ENCODE measurements at regions of chr19 and their contacts with region 1.

Region 1: DNA sequence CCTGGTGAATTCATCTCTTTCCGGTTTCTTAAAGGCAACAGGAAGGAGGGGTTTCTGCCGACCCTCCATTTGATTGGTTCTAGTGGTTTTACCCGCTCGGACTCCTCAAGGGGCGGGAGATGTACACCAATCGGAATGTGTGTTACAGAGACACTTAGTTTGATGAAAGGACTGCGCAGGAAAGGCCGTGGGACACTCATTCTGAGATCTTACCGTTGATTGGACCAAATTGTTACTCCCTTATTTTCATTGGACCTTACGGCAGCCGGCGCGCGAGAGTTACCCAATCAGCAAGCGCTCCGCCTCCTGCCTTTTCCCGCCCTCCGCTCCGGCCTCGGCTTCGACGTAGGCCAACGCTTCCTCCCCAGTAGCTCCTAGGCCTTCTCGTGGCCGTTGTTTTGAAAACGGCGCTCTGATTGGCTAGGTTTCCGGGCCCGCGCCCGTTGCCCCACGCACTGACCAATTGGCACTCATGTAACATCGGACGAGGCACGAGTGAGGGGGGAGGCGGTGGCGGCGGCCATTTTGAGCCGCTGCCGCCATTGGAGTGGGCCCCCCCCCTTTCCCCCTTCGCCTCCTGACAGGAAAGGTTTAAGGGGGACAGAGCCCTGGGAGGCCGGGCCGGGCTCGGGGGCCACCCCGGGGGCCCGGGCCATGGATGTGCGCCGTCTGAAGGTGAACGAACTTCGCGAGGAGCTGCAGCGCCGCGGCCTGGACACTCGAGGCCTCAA is at the start of gene HNRNPUL1:
- DNase-seq: peak; percentile 99
- H3K4me3 ChIP-seq: peak within 1 kb of the TSS; percentile 87 to 100
- H3K27ac ChIP-seq: peak within 1 kb of the TSS; percentile 98 to 100
- H3K4me1 ChIP-seq: peaks cover 21% of the 10 kb centered on the region
- H3K27me3 ChIP-seq: no peaks in the 10 kb centered on the region
- CTCF ChIP-seq: peak in 1 of 3 experiments; percentile 24
- POLR2A ChIP-seq: no peak
- total RNA-seq, gene HNRNPUL1: 192 to 197 TPM

Region 2: DNA sequence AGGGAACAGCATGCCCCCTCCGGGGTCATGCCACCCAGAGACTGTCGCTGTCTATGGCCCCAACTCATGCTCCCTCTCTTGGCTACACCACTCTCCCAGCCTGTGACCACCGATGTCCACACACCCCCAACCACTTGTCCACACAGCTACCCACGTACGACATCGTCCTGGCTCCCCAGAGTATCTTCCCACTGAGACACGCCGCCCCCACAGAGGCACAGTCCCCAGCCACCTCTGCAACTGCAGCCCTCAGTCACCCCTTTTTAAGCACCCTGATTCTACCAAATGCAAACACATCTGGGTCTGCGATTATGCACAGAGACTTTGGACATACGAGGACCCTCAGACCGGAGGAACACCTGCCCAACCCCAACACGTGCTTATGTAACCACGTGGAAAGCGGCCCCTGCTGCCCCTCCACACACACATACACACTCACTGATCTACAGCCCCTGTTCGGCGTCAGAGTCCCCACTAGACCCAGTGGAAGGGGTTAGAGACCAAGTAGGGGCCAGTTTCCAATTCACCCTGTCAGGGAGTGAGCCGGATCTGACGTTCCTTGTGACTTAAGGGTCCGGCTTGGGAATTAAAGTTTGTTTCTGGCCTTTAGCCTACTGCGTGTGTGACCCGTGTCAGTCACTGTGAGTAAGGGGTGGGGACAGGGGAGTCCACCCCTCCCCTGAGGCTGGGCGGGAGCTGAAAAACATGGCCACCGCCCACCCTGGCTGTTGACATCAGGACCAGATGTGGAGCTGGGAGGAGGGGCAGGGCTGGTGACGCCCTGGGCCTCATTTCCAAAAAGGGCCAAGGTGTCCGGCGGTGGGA is 56.9 kb before region 1 on chr19:
- intact Hi-C with region 1: loop called (anchors 5 kb)
- DNase-seq: peak; percentile 46
- H3K4me3 ChIP-seq: no peak overlapping the region
- H3K27ac ChIP-seq: no peak overlapping the region
- H3K4me1 ChIP-seq: no peaks in the 10 kb centered on the region
- H3K27me3 ChIP-seq: no peaks in the 10 kb centered on the region
- CTCF ChIP-seq: no peak
- POLR2A ChIP-seq: no peak

Region 3: DNA sequence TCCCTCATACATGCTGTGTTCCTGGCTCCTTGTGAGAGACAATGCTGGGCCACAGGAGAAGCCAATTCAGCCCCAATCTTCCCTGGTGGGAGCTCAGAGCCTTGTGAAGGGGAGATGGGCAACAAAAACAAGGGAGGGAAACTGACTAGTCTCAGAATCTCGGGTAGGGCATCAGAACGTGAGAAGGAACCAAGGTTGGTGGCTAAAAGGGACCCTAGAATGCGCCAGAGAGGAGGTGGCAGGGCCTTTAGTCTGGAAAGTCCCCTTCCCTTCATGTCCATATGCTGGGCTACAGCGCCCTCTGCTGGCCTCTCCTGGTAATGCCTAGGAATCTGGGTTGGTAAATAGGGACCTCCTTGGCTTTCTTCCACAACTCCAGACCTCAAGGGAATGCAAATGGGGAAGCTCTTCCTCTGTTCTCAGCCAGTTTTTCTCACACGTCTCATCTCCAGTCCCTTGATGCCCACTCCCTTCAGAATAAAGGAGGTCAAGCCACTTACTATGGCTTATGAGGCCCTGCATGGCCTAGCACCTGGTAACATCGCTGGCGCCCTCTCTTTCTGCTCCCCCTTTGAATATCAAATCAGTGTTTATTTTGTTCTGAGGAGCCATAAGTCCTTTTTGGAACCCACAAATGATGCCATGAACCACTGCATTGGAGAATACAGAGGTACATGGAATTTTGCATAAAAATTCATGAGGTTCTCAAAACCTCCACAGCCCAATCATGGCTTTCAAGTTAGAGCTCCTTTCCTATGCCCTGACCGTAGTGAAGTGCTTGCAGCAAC is 44.6 kb after region 1 on chr19:
- intact Hi-C with region 1: loop called (anchors 5 kb)
- DNase-seq: peak; percentile 98
- H3K4me3 ChIP-seq: peak overlapping the region in 1 of 2 donors; percentile 77
- H3K27ac ChIP-seq: peak overlapping the region; percentile 93 to 97
- H3K4me1 ChIP-seq: peaks cover 20% of the 10 kb centered on the region
- H3K27me3 ChIP-seq: no peaks in the 10 kb centered on the region
- CTCF ChIP-seq: peak; percentile 94 to 99 (median 98)
- POLR2A ChIP-seq: no peak

Region 4: DNA sequence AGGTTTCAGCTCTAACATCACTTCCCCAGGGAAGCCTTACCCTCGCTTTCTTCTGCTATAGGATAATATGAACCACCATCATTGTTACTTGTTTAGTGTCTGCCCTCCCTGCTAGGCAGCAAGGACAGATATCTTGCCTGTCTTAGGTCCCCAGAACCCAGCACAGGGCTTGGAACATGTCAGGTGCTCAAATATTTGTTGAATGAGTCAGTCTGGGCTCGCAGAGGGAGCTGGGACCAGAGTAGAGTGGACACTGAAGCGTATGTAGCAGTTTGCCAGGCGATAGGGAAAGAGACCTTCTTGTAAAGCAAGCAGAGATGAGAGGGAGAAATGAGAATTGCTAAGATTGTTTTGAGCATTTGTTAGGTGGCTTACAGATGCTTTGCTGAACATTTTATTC is 145.3 kb after region 1 on chr19:
- intact Hi-C with region 1: no loop called
- DNase-seq: peak; percentile 63
- H3K4me3 ChIP-seq: no peak overlapping the region
- H3K27ac ChIP-seq: no peak overlapping the region
- H3K4me1 ChIP-seq: peaks cover 3% of the 10 kb centered on the region
- H3K27me3 ChIP-seq: no peaks in the 10 kb centered on the region
- CTCF ChIP-seq: no peak
- POLR2A ChIP-seq: no peak

Region 5: DNA sequence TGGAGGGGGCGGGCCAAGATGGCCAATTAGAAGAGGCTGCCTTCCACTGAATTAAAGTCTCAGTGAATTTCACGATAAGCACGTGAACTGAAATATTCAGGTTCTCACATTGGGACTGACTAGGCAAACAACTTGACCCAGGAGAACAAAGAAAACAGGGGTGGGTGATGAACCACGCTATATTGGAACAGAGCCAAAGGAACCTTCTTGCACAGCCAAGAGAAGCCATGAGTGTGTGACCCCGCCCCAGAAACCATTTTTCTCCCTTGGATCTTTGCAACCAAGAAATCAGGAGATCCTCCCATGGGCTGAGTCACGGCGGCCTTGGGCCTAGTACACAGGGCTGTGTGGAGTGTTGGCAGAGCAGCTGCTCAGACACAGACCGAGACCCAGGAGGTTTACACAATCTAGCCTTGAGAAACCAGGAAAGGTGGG is 215.8 kb after region 1 on chr19:
- intact Hi-C with region 1: no loop called
- DNase-seq: peak; percentile 62
- H3K4me3 ChIP-seq: peak overlapping the region in 1 of 2 donors; percentile 1
- H3K27ac ChIP-seq: peak overlapping the region in 1 of 2 donors; percentile 58
- H3K4me1 ChIP-seq: no peaks in the 10 kb centered on the region
- H3K27me3 ChIP-seq: no peaks in the 10 kb centered on the region
- CTCF ChIP-seq: no peak
- POLR2A ChIP-seq: no peak